Gastrocnemius medialis (tissue), 4 donors: ENCODE measurements at regions of chr21 and their contacts with region 1.

Region 1: GRCh38 chr21:41289426-41289825 is 27.2 kb upstream of the FAM3B start:
- DNase-seq: no peak
- ATAC-seq: no peak
- H3K4me3 ChIP-seq: no peak overlapping the region
- H3K27ac ChIP-seq: no peak overlapping the region
- H3K4me1 ChIP-seq: no peaks in the 10 kb centered on the region
- H3K27me3 ChIP-seq: peaks cover 0 to 15% (median 14%) of the 10 kb centered on the region in 3 donors
- CTCF ChIP-seq: no peak
- POLR2A ChIP-seq: no peak

Region 2: GRCh38 chr21:41068967-41069642 is 220.3 kb before region 1 on chr21:
- in situ Hi-C with region 1: no loop called
- intact Hi-C with region 1: no loop called
- DNase-seq: peak; percentile 31 to 35
- ATAC-seq: no peak
- H3K4me3 ChIP-seq: peak overlapping the region in 1 of 4 donors; percentile 25
- H3K27ac ChIP-seq: no peak overlapping the region
- H3K4me1 ChIP-seq: peaks cover 0 to 4% of the 10 kb centered on the region in 2 donors
- H3K27me3 ChIP-seq: peaks cover 4 to 14% (median 8%) of the 10 kb centered on the region in 3 donors
- CTCF ChIP-seq: peak in 4 of 5 experiments; percentile 38 to 67 (median 56)
- POLR2A ChIP-seq: no peak

Region 3: DNA sequence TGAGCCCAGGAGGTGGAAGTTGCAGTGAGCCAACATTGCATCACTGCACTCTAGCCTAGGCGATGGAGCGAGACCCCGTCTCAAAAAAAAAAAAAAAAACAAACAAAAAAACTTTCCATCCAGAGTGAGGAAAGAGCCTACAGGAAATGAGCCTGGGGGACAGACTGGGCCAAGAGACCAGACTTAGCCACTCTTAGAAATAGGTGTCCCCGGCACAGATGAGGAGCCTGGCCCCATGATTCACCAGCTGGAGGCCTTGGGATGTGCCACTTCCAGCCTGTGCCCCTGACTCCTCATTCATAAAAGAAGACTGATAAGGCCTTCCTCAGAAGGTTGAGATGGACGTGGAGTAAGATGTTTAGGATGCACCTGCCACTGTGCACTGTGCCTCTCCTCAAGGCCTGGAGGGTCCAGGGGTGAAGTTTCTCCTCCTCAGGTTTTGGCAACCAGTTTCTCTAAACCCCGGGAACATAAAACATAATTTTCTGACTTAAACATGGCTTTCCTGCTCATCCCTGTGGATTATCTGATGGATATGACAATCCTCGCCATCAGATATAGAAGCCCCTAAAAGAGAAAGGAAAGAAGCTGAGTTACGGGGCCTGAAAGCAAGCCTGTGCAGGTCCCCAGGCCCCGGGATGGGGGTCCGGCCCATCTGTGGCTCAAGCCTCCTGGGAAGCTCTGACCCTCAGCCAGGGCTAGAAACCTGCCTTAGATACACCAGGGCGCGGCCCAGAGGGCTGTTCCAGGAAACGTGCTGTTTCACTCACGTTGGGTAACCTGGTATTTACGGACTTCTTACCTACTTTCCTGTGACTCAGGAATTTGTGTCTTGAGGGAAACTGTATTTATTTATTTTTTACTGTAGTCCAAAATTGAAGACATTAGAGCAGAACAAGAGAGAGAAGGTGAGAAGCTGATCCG is 162.6 kb after region 1 on chr21:
- in situ Hi-C with region 1: loop called in 3 of 4 experiments (anchors 5 to 10 kb)
- intact Hi-C with region 1: no loop called
- DNase-seq: no peak
- ATAC-seq: no peak
- H3K4me3 ChIP-seq: no peak overlapping the region
- H3K27ac ChIP-seq: no peak overlapping the region
- H3K4me1 ChIP-seq: no peaks in the 10 kb centered on the region
- H3K27me3 ChIP-seq: no peaks in the 10 kb centered on the region
- CTCF ChIP-seq: no peak
- POLR2A ChIP-seq: no peak